SK-N-SH (cell line): ENCODE measurements at regions of chr9 and their contacts with region 1.

Region 1: GRCh38 chr9:125706661-125707471 is at the start of gene MAPKAP1:
- DNase-seq: peak; percentile 98
- H3K4me3 ChIP-seq: peak within 1 kb of the TSS; percentile 85 to 90
- H3K27ac ChIP-seq: peak within 1 kb of the TSS; percentile 54 to 92
- H3K4me1 ChIP-seq: peaks cover under 1 to 15% of the 10 kb centered on the region in 2 experiments; a peak in 2 of 4 replicates
- H3K27me3 ChIP-seq: no peaks in the 10 kb centered on the region
- CTCF ChIP-seq: no peak
- EP300 ChIP-seq: no peak
- RAD21 ChIP-seq: peak; percentile 35
- polyA plus RNA-seq, gene MAPKAP1: 97.9 and 117 TPM in 2 replicates

Region 2: DNA sequence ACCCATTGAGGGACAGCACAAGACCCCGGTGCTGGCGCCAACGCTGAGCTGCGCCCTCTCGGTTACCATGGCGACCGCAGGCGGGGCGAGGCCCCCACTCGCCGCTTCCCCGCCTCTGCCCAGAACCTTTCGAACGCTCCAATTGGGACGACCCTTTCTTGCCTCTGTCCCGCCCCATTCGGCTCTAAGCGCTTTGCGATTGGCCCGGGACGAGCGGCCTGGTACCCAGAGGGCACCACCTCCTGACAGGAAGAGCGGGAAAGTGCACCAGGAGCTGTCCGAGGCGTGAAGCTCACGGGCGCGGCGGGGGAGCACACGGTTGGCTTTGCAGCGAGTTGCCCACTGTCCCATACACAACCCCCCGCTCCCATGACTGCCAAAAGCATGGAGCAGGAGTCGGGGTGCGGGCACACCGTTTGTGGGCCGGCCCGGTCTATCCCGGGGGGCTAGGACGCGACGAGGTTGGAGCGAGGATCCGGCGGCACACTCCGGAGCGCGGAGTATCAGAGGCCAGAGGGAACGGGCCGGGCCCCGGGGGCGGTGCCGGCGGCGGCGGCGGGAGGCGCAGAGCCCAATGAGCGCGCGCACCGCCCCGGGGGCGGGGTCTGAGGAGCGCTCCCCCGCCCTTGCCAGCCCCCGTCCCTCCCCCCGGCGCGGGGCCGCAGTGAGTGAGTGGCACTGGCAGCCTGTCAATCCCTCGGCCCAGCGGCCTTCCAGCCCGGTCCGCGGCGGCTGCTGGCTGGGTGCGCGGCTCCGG is 39.3 kb after region 1 on chr9:
- CTCF ChIA-PET with region 1: no interaction called
- POLR2A ChIA-PET with region 1: interaction called, 14 read pairs
- DNase-seq: peak; percentile 96
- H3K4me3 ChIP-seq: peak overlapping the region; percentile 53 to 96
- H3K27ac ChIP-seq: peak overlapping the region; percentile 72 to 97
- H3K4me1 ChIP-seq: peaks cover 8 to 9% of the 10 kb centered on the region in 2 experiments; a peak in 3 of 4 replicates
- H3K27me3 ChIP-seq: no peaks in the 10 kb centered on the region
- CTCF ChIP-seq: no peak
- EP300 ChIP-seq: no peak
- RAD21 ChIP-seq: no peak; the same call in 1 of the 2 replicates